Prostate gland (tissue), 2 donors: ENCODE measurements at regions of chr16 and their contacts with region 1.

Region 1: DNA sequence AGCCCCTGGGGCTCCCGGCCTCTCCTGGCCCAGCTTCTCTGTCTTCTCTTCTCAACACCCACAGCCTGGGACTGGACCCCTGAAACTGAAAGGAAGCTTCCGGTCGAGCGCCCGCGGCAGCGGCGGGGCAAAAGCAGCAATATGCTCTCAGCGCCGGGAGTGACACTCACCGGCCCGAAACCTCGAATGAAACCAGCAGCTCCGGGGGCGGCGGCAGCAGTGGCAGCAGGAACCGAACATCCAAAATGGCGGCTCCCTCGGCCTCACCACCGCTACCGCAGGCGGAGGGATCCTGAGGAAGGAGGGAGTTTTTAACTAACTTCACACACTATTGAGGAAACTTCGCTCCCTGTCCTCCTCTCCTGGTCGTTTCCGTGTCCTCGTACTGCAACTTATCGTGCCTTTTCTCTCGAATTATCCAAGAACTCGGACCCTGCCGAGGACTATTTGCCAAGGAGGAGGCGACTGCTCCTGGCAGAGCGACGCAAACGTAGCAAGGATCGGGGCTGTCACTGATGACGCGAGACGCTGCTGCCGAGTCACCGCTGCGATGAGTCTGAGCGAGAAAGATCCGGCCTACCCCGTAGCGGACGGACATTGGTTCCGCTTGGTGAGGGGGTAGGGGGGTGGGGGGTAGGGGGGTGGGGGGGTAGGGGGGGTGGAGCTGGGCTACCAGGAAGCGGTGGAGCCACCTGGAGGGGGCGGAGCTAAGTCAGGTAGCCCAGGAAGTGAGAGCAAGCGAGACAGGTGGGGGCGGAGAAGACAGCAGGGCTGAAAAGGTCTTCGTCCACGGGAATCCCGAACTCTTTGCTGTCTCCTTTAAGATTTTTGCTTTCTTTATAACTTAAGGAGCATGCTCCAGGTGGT is at the start of gene AP1G1:
- DNase-seq: peak; percentile 98
- H3K4me3 ChIP-seq: peak within 1 kb of the TSS; percentile 82 to 90
- H3K27ac ChIP-seq: peak within 1 kb of the TSS; percentile 97 to 99
- H3K4me1 ChIP-seq: no peaks in the 10 kb centered on the region
- H3K27me3 ChIP-seq: no peaks in the 10 kb centered on the region
- CTCF ChIP-seq: no peak
- POLR2A ChIP-seq: peak; percentile 56
- total RNA-seq, gene AP1G1: 68.0 to 94.6 TPM

Region 2: DNA sequence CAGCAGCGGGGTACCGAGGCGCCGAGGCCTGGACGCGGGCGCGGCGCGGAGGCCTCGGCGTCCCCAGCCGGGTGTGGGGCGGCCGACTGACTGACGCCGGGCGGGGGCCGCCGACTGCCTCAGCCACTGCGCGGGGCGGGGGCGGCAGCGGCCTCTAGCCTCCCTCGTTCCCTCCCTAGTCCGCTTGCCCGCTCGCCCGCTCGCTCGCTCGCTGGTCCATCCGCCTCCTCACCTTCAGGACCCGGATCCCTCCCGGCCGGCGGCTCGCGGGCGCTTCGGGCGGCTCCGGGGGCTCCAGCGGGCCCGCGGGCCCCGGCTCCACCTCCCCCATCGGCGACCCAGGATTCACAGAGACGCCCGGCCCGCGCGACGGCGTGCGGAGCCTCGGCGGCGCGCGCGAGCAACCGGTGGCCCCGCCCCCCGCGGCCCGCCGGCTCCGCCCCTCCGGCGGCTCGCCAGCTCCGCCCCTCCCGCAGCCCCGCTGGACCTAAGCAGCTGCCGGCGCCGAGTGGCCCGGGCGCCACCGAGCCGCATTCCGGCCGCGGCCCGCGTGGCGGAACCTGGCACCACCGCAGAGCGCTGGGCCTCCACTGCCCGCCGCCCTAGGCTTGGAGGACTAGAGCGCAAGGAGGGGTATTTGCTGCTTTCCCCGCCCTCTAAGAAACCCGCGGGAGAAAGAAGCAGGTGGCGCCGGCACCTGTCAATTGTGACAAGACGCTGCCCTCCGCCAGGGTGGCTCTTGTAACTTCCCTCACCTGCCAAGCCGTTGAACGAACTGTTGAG is 85.1 kb before region 1 on chr16:
- intact Hi-C with region 1: loop called (anchors 5 kb)
- DNase-seq: peak; percentile 70
- H3K4me3 ChIP-seq: peak overlapping the region; percentile 71 to 86
- H3K27ac ChIP-seq: peak overlapping the region; percentile 83 to 88
- H3K4me1 ChIP-seq: no peaks in the 10 kb centered on the region
- H3K27me3 ChIP-seq: no peaks in the 10 kb centered on the region
- CTCF ChIP-seq: peak in 2 of 4 experiments; percentile 11 to 31
- POLR2A ChIP-seq: no peak

Region 3: DNA sequence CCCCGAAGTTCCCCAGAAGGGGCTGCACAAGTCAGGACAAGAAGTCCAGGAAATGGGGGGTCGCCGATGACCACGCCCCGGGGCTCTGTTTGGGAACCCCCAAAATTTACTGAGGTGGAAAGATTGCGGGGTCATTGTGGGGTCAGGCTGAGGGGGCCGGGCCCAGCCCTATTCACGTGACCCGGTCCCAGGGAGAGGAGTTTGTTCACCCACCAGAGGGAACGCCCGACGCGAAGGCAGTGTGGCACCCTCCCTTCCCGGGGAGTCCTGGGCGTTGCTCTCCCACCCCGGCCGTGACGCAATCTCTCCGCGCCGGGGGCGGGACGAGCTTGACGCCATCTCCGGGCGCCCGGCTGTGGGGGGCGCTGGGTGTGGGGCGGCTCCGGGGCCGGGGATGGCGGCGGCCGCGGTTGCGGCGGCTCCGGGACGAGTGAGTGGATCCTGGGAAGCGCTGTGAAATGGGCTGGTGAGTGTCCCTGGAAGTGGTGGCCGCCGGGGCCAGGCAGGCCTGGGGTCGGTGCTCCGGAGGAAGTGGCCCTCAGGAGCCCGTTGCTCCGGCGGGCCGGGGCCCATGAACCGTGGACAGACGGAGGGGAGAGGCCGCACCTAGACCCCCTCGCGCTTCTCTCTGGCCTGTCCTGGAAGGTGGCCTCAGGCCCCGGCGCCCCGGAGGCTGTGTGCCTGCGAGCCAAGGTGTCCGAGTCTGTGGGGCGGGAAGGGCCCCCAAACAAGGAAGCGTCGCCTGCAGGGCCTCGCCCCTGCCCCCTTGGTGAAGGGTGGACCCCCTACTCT is 37.0 kb after region 1 on chr16 and contains the start of gene ATXN1L:
- intact Hi-C with region 1: loop called (anchors 5 kb)
- DNase-seq: peak; percentile 81
- H3K4me3 ChIP-seq: peak within 1 kb of the TSS; percentile 93 to 96
- H3K27ac ChIP-seq: peak within 1 kb of the TSS; percentile 83 to 89
- H3K4me1 ChIP-seq: peaks cover 4% of the 10 kb centered on the region
- H3K27me3 ChIP-seq: no peaks in the 10 kb centered on the region
- CTCF ChIP-seq: peak in 3 of 4 experiments; percentile 18 to 35 (median 24)
- POLR2A ChIP-seq: peak; percentile 86
- total RNA-seq, gene ATXN1L: 17.7 to 35.8 TPM

Region 4: DNA sequence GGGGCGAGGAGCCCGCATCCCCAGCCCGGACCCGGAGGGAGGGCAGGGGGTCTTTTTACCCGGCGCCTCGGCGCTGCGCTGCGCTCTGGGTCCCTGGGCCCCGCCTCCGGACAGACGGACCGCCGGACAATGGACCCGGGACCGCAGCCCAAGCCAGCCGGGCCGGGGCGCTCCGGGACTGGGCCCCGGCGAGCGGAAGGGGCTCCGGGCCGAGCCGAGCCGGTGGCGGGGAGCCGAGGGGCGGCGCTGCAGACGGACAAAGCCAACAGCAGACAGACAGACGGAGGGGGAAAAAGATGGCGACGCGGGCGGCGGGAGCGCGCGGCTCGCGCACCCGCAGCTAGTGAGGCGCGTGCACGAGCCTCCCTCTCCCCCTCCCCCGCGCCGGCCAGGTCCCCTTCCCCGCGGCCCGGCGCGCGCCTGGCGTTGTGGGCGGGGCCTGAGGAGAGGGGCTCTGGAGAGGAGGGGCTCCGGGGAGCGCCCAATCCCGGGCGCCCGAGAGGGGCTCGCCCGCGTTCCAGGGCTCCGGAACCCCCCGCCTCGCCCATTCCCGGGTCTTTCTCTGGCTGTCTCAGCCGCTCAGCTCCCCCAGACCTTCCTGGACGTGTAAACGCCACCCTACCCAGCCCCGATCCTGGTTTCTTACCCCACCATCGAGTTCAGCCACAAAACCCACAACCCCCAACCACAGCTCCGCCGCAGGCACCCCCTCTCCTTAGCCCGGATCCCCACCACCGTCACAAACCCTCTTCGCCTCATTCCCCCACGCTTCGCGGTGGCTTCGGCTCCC is 75.2 kb after region 1 on chr16 and contains the start of gene ZNF821:
- intact Hi-C with region 1: loop called (anchors 5 kb)
- DNase-seq: peak; percentile 79
- H3K4me3 ChIP-seq: peak within 1 kb of the TSS; percentile 78 to 96
- H3K27ac ChIP-seq: peak within 1 kb of the TSS; percentile 94 to 97
- H3K4me1 ChIP-seq: no peaks in the 10 kb centered on the region
- H3K27me3 ChIP-seq: no peaks in the 10 kb centered on the region
- CTCF ChIP-seq: peak in 2 of 4 experiments; percentile 11 to 40
- POLR2A ChIP-seq: peak; percentile 41
- total RNA-seq, gene ZNF821: 20.0 to 26.6 TPM

Region 5: DNA sequence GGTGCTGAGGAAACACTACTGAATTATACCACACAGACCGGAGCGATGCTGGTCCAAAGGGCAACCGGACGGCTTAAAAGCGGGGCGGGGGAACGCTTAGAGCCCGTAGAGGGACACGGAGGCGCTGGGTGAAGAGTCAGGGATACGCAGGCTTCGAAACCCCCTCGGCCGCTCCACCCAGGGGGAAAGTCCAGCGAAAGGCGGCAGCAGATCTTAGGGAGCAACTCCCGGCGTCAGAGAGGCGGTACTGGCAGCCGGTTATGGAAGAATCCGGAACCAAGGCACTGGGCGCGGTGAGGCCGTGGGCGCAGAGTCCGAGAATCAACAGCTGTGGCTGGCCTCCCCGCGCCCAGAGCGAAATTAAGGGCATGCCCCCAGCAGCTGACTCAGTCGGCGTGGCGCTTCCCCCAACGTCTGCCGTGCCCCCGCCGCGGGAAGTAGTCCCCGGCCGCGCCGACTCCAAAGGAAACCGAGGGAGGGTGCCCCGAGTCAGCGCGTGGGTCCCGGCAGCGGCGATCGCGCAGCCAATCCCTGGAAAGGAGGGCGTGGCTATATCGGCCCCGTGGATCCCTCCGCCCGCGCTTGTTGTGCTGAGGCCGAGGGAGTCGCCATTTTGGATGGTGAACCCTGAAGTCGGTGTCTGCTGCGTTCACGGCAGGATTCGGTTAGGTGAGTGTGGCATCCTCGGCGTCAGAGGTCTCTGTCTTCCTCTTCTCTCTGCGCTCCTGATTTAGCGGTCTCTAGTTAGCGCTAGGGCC is 86.3 kb after region 1 on chr16 and contains the start of gene IST1:
- intact Hi-C with region 1: loop called (anchors 5 kb)
- DNase-seq: peak; percentile 98
- H3K4me3 ChIP-seq: peak within 1 kb of the TSS; percentile 70 to 98
- H3K27ac ChIP-seq: peak within 1 kb of the TSS; percentile 97
- H3K4me1 ChIP-seq: peaks cover 2% of the 10 kb centered on the region
- H3K27me3 ChIP-seq: no peaks in the 10 kb centered on the region
- CTCF ChIP-seq: peak in 1 of 4 experiments; percentile 24
- POLR2A ChIP-seq: peak; percentile 94
- total RNA-seq, gene IST1: 193 to 249 TPM

Region 6: DNA sequence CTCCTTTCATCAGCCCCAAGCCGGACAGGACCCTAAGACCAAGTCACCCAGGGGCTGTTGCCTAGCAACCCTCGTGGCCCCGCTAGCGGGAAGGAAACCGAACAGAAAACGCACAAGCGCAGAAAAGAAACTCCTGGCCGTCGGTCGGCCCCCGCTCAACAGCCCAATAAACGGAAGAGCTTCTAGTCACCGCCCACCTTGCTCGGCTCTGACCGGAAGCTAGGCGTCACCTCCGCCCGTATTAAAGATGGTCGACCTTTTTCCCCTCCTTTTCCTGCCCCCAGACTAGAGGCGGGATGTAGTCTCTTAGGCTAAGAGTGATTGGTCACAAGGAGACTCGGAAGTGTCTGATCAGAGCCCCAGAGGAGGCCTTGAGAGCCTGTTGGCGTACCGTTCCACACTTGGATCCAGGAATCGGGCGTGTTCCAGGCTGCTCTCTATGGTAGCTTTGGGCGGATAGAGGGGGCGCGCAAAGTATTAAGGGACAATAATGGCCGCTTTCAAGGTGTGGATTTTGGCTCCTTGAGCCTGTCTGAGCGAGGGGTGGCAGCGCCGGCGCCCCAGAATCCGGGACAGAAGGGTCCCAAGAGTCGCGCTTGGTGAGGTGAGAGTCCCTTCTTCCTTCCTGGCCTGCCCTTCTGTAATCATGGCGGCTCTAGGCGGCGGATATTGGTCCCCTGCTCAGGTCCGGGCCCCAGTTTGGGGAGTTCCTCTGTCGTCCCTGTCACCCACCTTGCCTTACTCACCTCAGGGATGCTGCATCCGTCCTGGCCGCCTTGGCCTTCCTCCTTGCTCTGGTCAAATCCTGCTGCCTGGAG is 284.8 kb after region 1 on chr16 and contains the starts of genes DHX38 and TXNL4B:
- intact Hi-C with region 1: loop called (anchors 10 kb)
- DNase-seq: peak; percentile 97
- H3K4me3 ChIP-seq: peak within 1 kb of the TSS; percentile 76 to 78
- H3K27ac ChIP-seq: peak within 1 kb of the TSS; percentile 83
- H3K4me1 ChIP-seq: peaks cover 8% of the 10 kb centered on the region
- H3K27me3 ChIP-seq: no peaks in the 10 kb centered on the region
- CTCF ChIP-seq: peak in 1 of 4 experiments; percentile 30
- POLR2A ChIP-seq: peak; percentile 81
- total RNA-seq, gene DHX38: 61.9 to 63.9 TPM
- total RNA-seq, gene TXNL4B: 14.1 to 36.2 TPM